ENCODE measurements at regions of chr10 and their contacts with region 1.

Region 1: GRCh38 chr10:119409866-119410299 is 132.6 kb downstream of the RGS10 start:
- DNase-seq: peak; percentile 86 to 91
- ATAC-seq: peak; percentile 52 to 80 (median 70)
- H3K4me3 ChIP-seq: no peak overlapping the region
- H3K27ac ChIP-seq: peak overlapping the region; percentile 67 to 92 (median 84)
- H3K4me1 ChIP-seq: peaks cover 35 to 99% (median 88%) of the 10 kb centered on the region in 9 donors
- H3K27me3 ChIP-seq: no peaks in the 10 kb centered on the region
- CTCF ChIP-seq: no peak

Region 2: DNA sequence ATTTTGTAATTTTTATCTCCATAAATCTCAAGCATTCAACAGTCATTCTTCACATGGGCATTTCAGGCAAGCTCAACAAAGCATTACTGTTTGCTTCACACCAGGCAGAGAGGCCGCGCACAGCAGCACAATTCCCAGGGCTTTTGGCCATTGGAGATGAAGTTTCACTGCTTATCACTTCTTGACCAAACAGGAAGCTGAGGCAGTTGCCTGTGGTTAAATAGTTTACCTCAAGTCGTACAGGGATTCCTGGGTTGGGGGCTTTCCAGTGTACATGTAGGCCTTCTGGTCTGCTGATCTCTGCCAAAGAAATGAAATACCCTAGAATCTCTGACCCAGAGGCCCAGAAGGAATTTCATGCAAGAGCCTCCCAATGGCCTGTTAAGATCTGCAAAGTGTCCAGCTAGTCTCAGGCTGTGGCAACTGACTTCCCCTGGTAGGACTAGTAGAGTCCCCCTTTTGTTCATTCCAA is 220.0 kb before region 1 on chr10:
- intact Hi-C with region 1: no loop called
- DNase-seq: no peak
- ATAC-seq: no peak
- H3K4me3 ChIP-seq: no peak overlapping the region
- H3K27ac ChIP-seq: no peak overlapping the region
- H3K4me1 ChIP-seq: peaks cover 0 to 22% (median 0%) of the 10 kb centered on the region in 9 donors
- H3K27me3 ChIP-seq: no peaks in the 10 kb centered on the region
- CTCF ChIP-seq: no peak

Region 3: GRCh38 chr10:119250641-119251314 is 159.1 kb before region 1 on chr10:
- intact Hi-C with region 1: no loop called
- DNase-seq: no peak
- ATAC-seq: peak in 4 of 8 donors; percentile 2 to 29 (median 18)
- H3K4me3 ChIP-seq: no peak overlapping the region
- H3K27ac ChIP-seq: peak overlapping the region; percentile 57 to 86 (median 82)
- H3K4me1 ChIP-seq: peaks cover 57 to 88% (median 79%) of the 10 kb centered on the region in 9 donors
- H3K27me3 ChIP-seq: no peaks in the 10 kb centered on the region
- CTCF ChIP-seq: no peak

Region 4: GRCh38 chr10:119299531-119299930 is 110.4 kb before region 1 on chr10:
- intact Hi-C with region 1: no loop called
- DNase-seq: no peak
- ATAC-seq: no peak
- H3K4me3 ChIP-seq: no peak overlapping the region
- H3K27ac ChIP-seq: peak overlapping the region in 2 of 10 donors; percentile 4 to 54
- H3K4me1 ChIP-seq: peaks cover 21 to 80% (median 52%) of the 10 kb centered on the region in 9 donors
- H3K27me3 ChIP-seq: no peaks in the 10 kb centered on the region
- CTCF ChIP-seq: peak in 1 of 9 donors; percentile 28

Region 5: GRCh38 chr10:119368991-119369869 is 40.7 kb before region 1 on chr10:
- intact Hi-C with region 1: loop called in 6 of 10 experiments (anchors 2 to 5 kb)
- DNase-seq: no peak
- ATAC-seq: peak in 1 of 8 donors; percentile 18
- H3K4me3 ChIP-seq: peak overlapping the region in 4 of 10 donors; percentile 15 to 26 (median 20)
- H3K27ac ChIP-seq: peak overlapping the region; percentile 44 to 95 (median 88)
- H3K4me1 ChIP-seq: peaks cover 37 to 85% (median 80%) of the 10 kb centered on the region in 9 donors
- H3K27me3 ChIP-seq: no peaks in the 10 kb centered on the region
- CTCF ChIP-seq: no peak